ENCODE measurements at regions of chr2 and their contacts with region 1.

Region 1: DNA sequence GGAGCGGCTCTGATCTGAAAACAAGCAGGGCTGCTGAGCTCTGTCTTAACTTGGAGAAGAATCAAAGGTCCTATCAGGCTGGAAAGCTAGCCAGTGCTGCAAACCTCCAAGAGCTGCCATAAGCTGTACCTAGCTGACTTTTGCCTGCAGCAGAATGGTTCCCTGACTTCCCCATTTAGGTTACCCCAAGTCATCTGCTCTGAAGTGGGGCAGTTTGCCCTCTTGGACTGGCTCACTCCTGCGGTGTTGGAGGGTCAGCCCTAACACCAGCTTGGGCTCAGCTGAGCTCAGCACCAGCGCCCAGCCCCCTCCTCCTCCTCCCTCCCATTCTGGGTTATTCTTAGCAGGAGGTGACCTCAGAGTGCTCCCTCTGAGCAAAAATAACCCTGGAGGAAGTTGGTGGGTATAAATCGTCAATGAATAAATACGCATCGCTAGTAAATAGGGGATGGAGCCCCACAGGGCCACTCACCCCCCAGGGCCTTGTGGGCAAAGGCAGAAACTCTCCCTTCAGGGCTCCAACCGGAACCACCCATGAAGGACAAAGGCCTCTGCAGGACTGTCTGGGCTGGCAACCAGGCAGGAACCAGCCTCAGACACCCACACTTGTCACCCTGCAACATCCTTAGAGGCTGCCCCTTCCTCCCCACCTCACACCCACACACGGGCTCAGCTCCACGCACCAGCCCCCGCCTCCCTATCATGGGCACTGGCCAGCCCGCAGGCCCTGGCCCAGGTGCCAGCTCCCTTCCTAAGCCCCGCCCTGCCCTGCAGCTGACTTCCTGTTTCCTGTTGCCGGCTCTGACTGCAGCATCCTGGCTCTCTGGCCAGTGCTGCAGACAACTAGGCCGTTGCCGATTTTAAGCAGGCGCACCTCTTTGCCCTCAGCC is 46.9 kb downstream of the DNMT3A start:
- DNase-seq: peak; percentile 54 to 93 (median 76)
- ATAC-seq: peak; percentile 87
- H3K4me3 ChIP-seq: peak overlapping the region; percentile 40
- H3K4me3 Mint-ChIP-seq: peak overlapping the region; percentile 88
- H3K27ac ChIP-seq: peak overlapping the region; percentile 90 to 91
- H3K27ac Mint-ChIP-seq: peak overlapping the region; percentile 99
- H3K4me1 ChIP-seq: peaks cover 68% of the 10 kb centered on the region
- H3K4me1 Mint-ChIP-seq: peaks cover 44% of the 10 kb centered on the region
- H3K27me3 ChIP-seq: no peaks in the 10 kb centered on the region
- H3K27me3 Mint-ChIP-seq: no peaks in the 10 kb centered on the region
- CTCF ChIP-seq: no peak

Region 2: DNA sequence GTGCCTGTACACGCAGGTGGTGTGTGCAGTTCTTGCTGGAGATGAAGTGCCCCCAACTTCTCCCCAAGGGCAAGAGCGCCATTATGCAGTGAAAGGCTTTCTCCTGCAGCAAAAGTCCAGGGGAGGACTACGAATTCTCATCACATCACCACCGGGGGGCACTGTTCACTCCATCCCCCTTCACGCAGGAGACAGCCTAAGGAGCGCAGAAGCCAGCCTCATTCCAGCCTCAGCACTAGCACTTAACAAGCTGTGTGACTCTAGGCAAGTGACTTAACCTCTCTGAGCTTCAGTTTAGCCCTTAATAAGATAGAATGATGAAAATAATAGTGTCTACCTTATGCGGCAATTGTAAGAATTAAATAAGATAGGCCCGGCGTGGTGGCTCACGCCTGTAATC is 14.6 kb after region 1 on chr2:
- CTCF ChIA-PET with region 1: interaction called, 3 read pairs
- POLR2A ChIA-PET with region 1: interaction called, 21 read pairs
- intact Hi-C with region 1: no loop called
- DNase-seq: peak; percentile 49 to 81 (median 60)
- ATAC-seq: peak; percentile 59
- H3K4me3 ChIP-seq: no peak overlapping the region
- H3K4me3 Mint-ChIP-seq: peak overlapping the region; percentile 25
- H3K27ac ChIP-seq: no peak overlapping the region
- H3K27ac Mint-ChIP-seq: peak overlapping the region; percentile 88
- H3K4me1 ChIP-seq: peaks cover 96% of the 10 kb centered on the region
- H3K4me1 Mint-ChIP-seq: peaks cover 87% of the 10 kb centered on the region
- H3K27me3 ChIP-seq: no peaks in the 10 kb centered on the region
- H3K27me3 Mint-ChIP-seq: no peaks in the 10 kb centered on the region
- CTCF ChIP-seq: peak; percentile 66

Region 3: DNA sequence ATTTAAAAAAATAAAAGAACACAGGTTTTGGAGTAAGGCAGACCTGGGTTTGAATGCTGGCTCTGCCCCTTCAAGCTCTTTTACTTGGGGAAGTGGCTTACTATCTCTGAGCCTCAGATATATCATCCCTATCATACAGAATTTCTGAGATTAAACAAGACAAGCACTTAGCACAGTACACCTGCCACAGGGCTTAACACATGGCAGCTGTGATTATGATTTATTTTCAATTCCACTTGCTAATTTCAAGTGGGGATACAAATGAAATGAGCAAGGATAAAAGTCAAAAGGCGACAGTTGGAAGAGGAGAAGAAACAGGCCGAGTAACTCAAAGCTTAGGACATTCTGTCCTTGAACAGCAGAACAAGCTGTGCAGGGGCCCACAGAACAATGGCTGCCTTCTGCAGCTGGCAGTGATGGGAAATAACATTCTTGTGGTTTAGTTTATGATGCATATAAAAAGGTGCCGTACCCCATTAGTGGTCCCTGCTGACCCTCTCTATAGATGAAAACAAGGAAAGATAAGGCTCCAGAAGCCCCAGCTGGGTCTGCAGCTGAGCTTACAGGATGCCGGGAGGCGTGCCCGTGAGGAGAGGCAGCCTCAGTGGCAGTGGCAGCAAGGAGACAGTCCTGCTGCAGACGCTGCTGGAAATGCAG is 642.2 kb after region 1 on chr2:
- CTCF ChIA-PET with region 1: no interaction called
- POLR2A ChIA-PET with region 1: no interaction called
- intact Hi-C with region 1: no loop called
- DNase-seq: no peak
- ATAC-seq: no peak
- H3K4me3 ChIP-seq: no peak overlapping the region
- H3K4me3 Mint-ChIP-seq: no peak overlapping the region
- H3K27ac ChIP-seq: no peak overlapping the region
- H3K27ac Mint-ChIP-seq: no peak overlapping the region
- H3K4me1 ChIP-seq: no peaks in the 10 kb centered on the region
- H3K4me1 Mint-ChIP-seq: no peaks in the 10 kb centered on the region
- H3K27me3 ChIP-seq: no peaks in the 10 kb centered on the region
- H3K27me3 Mint-ChIP-seq: no peaks in the 10 kb centered on the region
- CTCF ChIP-seq: no peak